Activated CD4-positive, alpha-beta T cell treated with anti-CD3 and anti-CD28 coated beads for 36 hours (primary cell): ENCODE measurements at regions of chr6 and their contacts with region 1.

Region 1: DNA sequence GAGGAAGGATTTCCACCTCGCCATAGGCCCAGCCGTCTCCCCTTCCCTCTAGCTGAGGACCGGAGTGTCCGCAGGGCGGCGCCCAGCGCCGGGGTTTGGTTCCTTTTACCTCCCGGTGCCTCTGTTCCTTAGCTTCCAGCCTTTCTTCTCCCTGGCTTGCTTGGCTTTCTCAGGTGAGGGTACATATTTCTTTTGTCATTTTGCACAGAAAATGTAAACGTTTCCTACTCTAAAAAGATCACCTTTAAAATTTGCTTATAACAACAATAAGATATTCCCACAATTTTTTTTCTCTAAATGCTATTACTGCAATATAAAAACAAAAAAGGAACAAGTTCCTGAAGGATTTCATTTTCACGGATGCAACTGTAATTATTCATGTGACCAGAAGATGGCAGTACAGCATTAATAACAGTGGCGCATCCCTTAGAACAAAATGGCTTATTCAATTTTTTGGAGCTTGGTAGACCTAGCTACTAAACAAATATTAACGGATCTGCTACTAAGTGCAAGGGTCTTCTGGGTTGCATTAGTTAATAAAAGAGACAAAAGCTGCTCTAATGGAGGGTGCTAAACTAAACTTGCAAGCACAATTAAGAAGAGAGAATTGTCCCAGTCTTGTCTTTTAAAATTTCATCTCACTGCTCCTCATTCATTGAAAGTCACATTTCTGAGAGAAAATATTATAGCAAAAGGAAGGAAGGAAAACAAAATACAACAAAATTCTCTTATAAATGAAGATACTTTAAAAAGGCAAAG is 172.9 kb downstream of the ADGRG6 start:
- DNase-seq: peak; percentile 10
- ATAC-seq: no peak
- H3K4me3 Mint-ChIP-seq: no peak overlapping the region
- H3K27ac Mint-ChIP-seq: no peak overlapping the region
- H3K4me1 Mint-ChIP-seq: peaks cover 5% of the 10 kb centered on the region
- H3K27me3 Mint-ChIP-seq: no peaks in the 10 kb centered on the region

Region 2: GRCh38 chr6:142462267-142462666 is 12.4 kb before region 1 on chr6:
- CTCF ChIA-PET with region 1: interaction called, 10 read pairs
- POLR2A ChIA-PET with region 1: no interaction called
- intact Hi-C with region 1: no loop called
- DNase-seq: no peak
- ATAC-seq: no peak
- H3K4me3 Mint-ChIP-seq: no peak overlapping the region
- H3K27ac Mint-ChIP-seq: no peak overlapping the region
- H3K4me1 Mint-ChIP-seq: peaks cover 3% of the 10 kb centered on the region
- H3K27me3 Mint-ChIP-seq: peaks cover 3% of the 10 kb centered on the region

Region 3: DNA sequence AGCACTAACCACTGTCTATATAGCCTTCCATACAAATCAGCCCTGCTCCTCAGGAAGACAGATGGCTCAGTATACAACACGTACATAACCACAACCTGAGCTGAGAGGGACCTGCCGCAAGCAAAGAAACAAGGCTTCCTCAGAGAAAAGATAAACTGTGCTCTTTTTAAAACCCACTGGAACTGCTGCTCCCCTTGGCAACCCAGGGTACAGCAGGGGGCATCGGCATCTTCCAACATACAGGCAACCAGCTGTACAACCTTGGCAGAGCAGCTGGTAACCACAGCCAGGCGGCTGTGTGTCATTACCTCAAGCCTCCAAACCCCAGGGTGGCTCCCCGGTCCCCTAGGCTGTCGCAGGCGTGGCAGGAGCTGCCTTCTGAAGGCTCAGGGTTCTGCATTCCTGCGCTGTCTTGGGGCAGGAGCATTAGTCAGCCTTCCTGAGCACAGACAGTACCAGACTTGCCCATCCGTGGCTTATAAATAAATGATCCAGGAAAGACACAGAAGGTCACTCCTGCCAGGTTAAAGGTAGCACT is 76.6 kb after region 1 on chr6:
- CTCF ChIA-PET with region 1: interaction called, 12 read pairs
- POLR2A ChIA-PET with region 1: no interaction called
- intact Hi-C with region 1: no loop called
- DNase-seq: peak; percentile 82
- ATAC-seq: peak; percentile 98
- H3K4me3 Mint-ChIP-seq: no peak overlapping the region
- H3K27ac Mint-ChIP-seq: no peak overlapping the region
- H3K4me1 Mint-ChIP-seq: peaks cover 27% of the 10 kb centered on the region
- H3K27me3 Mint-ChIP-seq: peaks cover 6% of the 10 kb centered on the region

Region 4: GRCh38 chr6:142692942-142693341 is 218.2 kb after region 1 on chr6:
- CTCF ChIA-PET with region 1: interaction called, 14 read pairs
- POLR2A ChIA-PET with region 1: no interaction called
- intact Hi-C with region 1: loop called (anchors 2 to 5 kb)
- DNase-seq: peak; percentile 79
- ATAC-seq: peak; percentile 75
- H3K4me3 Mint-ChIP-seq: no peak overlapping the region
- H3K27ac Mint-ChIP-seq: peak overlapping the region; percentile 62
- H3K4me1 Mint-ChIP-seq: peaks cover 27% of the 10 kb centered on the region
- H3K27me3 Mint-ChIP-seq: no peaks in the 10 kb centered on the region

Region 5: GRCh38 chr6:143427109-143427817 is 952.6 kb after region 1 on chr6:
- CTCF ChIA-PET with region 1: interaction called, 15 read pairs
- POLR2A ChIA-PET with region 1: no interaction called
- intact Hi-C with region 1: loop called (anchors 1 to 5 kb)
- DNase-seq: peak; percentile 86
- ATAC-seq: peak; percentile 100
- H3K4me3 Mint-ChIP-seq: no peak overlapping the region
- H3K27ac Mint-ChIP-seq: no peak overlapping the region
- H3K4me1 Mint-ChIP-seq: peaks cover 7% of the 10 kb centered on the region
- H3K27me3 Mint-ChIP-seq: no peaks in the 10 kb centered on the region